ENCODE measurements at regions of chr7 and their contacts with region 1.

Region 1: GRCh38 chr7:138459413-138460175 is 465 bp upstream of the TRIM24 start:
- DNase-seq: peak; percentile 99
- H3K4me3 ChIP-seq: peak overlapping the region; percentile 21 to 54 (median 52)
- H3K27ac ChIP-seq: no peak overlapping the region
- H3K4me1 ChIP-seq: peaks cover 5% of the 10 kb centered on the region
- H3K27me3 ChIP-seq: no peaks in the 10 kb centered on the region
- CTCF ChIP-seq: no peak
- POLR2A ChIP-seq: no peak

Region 2: GRCh38 chr7:138338361-138338760 is 121.2 kb before region 1 on chr7:
- CTCF ChIA-PET with region 1: no interaction called
- POLR2A ChIA-PET with region 1: no interaction called
- dilution Hi-C with region 1: no loop called
- intact Hi-C with region 1: loop called (anchors 1 kb)
- DNase-seq: peak; percentile 83
- H3K4me3 ChIP-seq: no peak overlapping the region
- H3K27ac ChIP-seq: peak overlapping the region; percentile 50
- H3K4me1 ChIP-seq: peaks cover 5% of the 10 kb centered on the region
- H3K27me3 ChIP-seq: no peaks in the 10 kb centered on the region
- CTCF ChIP-seq: no peak
- POLR2A ChIP-seq: no peak

Region 3: GRCh38 chr7:138407792-138408191 is 51.8 kb before region 1 on chr7:
- CTCF ChIA-PET with region 1: no interaction called
- POLR2A ChIA-PET with region 1: no interaction called
- dilution Hi-C with region 1: no loop called
- intact Hi-C with region 1: loop called (anchors 1 kb)
- DNase-seq: peak; percentile 46
- H3K4me3 ChIP-seq: no peak overlapping the region
- H3K27ac ChIP-seq: peak overlapping the region; percentile 6
- H3K4me1 ChIP-seq: peaks cover 17% of the 10 kb centered on the region
- H3K27me3 ChIP-seq: no peaks in the 10 kb centered on the region
- CTCF ChIP-seq: no peak
- POLR2A ChIP-seq: peak; percentile 37

Region 4: GRCh38 chr7:138542183-138542582 is 82.6 kb after region 1 on chr7:
- CTCF ChIA-PET with region 1: no interaction called
- POLR2A ChIA-PET with region 1: interaction called, 5 read pairs
- dilution Hi-C with region 1: no loop called
- intact Hi-C with region 1: loop called (anchors 1 kb)
- DNase-seq: no peak
- H3K4me3 ChIP-seq: no peak overlapping the region
- H3K27ac ChIP-seq: no peak overlapping the region
- H3K4me1 ChIP-seq: peaks cover 23% of the 10 kb centered on the region
- H3K27me3 ChIP-seq: no peaks in the 10 kb centered on the region
- CTCF ChIP-seq: no peak
- POLR2A ChIP-seq: no peak

Region 5: DNA sequence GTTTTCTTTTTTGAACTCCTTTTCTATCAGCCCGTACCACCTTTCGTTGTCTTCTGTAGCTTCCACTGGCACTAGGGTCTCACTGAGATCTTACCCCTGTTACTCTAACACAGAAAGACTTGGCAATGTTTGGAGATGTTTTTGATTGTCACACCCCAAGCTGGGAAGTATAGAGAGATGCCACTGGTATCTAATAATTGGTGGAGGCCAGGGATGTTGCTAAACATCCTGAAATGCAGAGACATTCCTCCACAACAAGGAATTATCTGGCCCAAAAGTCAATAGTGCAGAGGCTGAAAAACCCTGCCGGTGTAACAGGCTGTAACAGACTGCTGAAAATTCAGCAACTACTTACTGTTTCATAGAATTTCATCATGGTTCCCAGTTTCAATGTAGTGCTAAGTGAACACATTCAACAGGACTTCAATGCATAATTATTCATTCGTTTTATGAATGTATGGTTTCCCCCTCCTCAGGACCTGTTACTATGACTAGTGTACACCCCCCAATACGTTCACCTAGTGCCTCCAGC is 116.4 kb after region 1 on chr7:
- CTCF ChIA-PET with region 1: no interaction called
- POLR2A ChIA-PET with region 1: no interaction called
- dilution Hi-C with region 1: no loop called
- intact Hi-C with region 1: loop called (anchors 10 kb)
- DNase-seq: no peak
- H3K4me3 ChIP-seq: no peak overlapping the region
- H3K27ac ChIP-seq: no peak overlapping the region
- H3K4me1 ChIP-seq: no peaks in the 10 kb centered on the region
- H3K27me3 ChIP-seq: no peaks in the 10 kb centered on the region
- CTCF ChIP-seq: no peak
- POLR2A ChIP-seq: no peak

Measured in endothelial cell of umbilical vein (primary cell).